ENCODE measurements at regions of chr2 and their contacts with region 1.

Region 1: GRCh38 chr2:217713395-217714286 is 289.2 kb downstream of the TNS1 start:
- DNase-seq: peak; percentile 26
- ATAC-seq: peak; percentile 89
- H3K4me3 ChIP-seq: no peak overlapping the region
- H3K27ac ChIP-seq: no peak overlapping the region
- H3K4me1 ChIP-seq: no peaks in the 10 kb centered on the region
- H3K27me3 ChIP-seq: peaks cover 45% of the 10 kb centered on the region
- CTCF ChIP-seq: peak; percentile 83 to 96 (median 95)
- POLR2A ChIP-seq: no peak
- RAD21 ChIP-seq: peak; percentile 97

Region 2: DNA sequence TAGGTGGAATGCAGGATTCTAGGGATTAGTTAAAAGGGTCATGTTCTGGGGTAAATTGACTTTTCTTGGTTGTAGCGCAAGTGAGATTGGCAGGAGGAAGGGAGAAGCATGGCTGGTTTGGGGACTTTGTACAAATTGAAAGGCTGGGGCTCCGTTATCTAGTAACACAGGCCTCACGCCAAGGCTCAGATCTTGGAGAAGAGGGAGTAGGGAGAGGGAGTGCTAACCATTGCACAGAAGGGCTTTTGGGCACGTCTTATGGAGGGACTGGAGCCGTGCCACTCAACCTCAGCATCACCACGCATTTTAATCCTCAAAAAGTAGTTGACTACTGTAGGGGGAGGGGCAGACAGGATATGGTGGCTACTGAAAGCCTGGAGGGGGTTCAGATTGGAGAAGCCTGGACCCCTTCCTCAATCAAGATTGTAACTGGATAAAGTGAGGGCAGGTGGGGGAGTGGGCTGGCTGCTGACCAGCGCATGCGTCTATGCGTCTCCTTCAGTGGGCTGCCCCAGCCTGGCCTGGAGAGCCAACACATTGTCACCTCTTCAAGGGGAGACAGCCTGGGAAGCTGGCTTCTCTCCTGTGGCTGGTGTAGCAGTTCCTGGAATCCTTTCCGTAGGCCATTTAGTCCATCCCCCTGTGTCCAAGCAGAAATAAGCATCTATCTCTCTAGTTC is 1032.6 kb before region 1 on chr2:
- CTCF ChIA-PET with region 1: interaction called, 9 read pairs
- POLR2A ChIA-PET with region 1: no interaction called
- RAD21 ChIA-PET with region 1: no interaction called
- intact Hi-C with region 1: loop called (anchors 1 kb)
- DNase-seq: no peak
- ATAC-seq: no peak
- H3K4me3 ChIP-seq: no peak overlapping the region
- H3K27ac ChIP-seq: no peak overlapping the region
- H3K4me1 ChIP-seq: peaks cover 10% of the 10 kb centered on the region in 2 experiments
- H3K27me3 ChIP-seq: no peaks in the 10 kb centered on the region
- CTCF ChIP-seq: no peak
- POLR2A ChIP-seq: no peak
- RAD21 ChIP-seq: no peak

Region 3: DNA sequence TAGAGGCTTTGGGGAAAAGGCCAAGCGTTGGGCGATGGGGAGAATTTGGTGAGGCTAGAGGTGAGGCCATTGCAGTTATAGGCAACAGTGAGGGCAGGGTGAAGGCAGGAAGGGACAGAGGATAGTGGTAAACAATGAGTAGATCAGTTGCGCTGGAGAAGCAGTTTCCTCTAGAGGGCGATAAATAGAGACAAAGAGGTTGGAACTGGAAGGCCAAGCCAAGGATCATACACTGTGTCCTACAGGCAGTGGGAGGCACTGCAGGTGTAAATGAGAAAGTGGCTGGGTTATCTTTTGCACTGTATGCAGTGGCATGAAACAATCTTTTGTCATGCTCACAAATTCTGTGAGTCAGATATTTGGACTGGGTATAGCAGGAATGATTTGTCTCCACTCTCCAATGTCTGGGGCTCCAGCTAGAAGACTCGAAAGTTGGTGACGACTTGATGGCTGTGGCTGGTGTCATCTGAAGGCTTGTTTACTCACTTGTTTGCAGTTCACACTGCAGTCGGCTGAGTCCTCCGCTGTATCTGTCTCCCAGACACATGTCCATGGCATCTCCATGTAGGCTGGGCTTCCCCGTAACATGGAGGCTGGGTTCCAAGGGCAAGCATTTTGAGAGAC is 935.9 kb before region 1 on chr2:
- CTCF ChIA-PET with region 1: no interaction called
- POLR2A ChIA-PET with region 1: no interaction called
- RAD21 ChIA-PET with region 1: no interaction called
- intact Hi-C with region 1: loop called (anchors 5 kb)
- DNase-seq: peak; percentile 84
- ATAC-seq: peak; percentile 99
- H3K4me3 ChIP-seq: no peak overlapping the region
- H3K27ac ChIP-seq: no peak overlapping the region
- H3K4me1 ChIP-seq: no peaks in the 10 kb centered on the region
- H3K27me3 ChIP-seq: no peaks in the 10 kb centered on the region
- CTCF ChIP-seq: peak; percentile 95 to 99 (median 95)
- POLR2A ChIP-seq: no peak
- RAD21 ChIP-seq: peak; percentile 73

Region 4: GRCh38 chr2:217166241-217166850 is 547.3 kb before region 1 on chr2:
- CTCF ChIA-PET with region 1: interaction called, 16 read pairs
- POLR2A ChIA-PET with region 1: no interaction called
- RAD21 ChIA-PET with region 1: interaction called in 1 of 2 experiments, 3 read pairs
- intact Hi-C with region 1: loop called (anchors 5 kb)
- DNase-seq: peak; percentile 32
- ATAC-seq: peak; percentile 76
- H3K4me3 ChIP-seq: no peak overlapping the region
- H3K27ac ChIP-seq: no peak overlapping the region
- H3K4me1 ChIP-seq: peaks cover 0 to 6% of the 10 kb centered on the region in 2 experiments; a peak in 2 of 4 replicates
- H3K27me3 ChIP-seq: peaks cover 27% of the 10 kb centered on the region
- CTCF ChIP-seq: peak; percentile 49 to 65 (median 61); a peak in 5 of 6 replicates
- POLR2A ChIP-seq: no peak
- RAD21 ChIP-seq: peak; percentile 74

Region 5: DNA sequence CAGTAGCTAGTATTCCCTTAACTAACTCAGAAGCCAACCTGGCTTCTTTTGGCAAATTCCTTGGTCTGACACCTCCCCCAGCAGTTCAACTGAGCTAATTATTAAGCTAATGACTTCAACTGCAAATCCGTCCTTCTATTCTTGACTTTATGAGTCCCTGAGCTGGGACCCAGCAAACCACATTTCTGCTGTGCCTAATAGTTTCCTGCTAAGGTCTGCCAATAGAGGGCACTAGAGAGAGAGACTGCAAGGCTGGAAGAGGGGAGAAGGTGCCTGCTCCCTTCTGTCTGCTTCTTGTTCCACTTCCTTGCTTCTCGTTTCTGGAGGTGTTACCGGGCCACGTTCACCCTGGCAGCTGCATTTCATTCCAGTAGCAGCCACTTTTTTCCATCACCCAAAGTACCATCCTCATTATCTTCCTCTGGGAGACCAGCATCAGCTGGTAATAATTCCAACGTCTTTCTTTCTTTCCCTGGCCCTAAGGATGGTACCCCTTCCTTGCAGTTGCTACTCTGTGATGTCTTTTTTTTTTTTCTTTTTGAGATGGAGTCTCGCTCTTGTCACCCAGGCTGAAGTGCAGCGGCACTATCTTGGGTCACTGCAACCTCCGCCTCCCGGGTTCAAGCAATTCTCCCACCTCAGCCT is 62.8 kb before region 1 on chr2:
- CTCF ChIA-PET with region 1: interaction called, 18 read pairs
- POLR2A ChIA-PET with region 1: no interaction called
- RAD21 ChIA-PET with region 1: interaction called in 1 of 2 experiments, 4 read pairs
- intact Hi-C with region 1: loop called (anchors 2 kb)
- DNase-seq: peak; percentile 60
- ATAC-seq: peak; percentile 87
- H3K4me3 ChIP-seq: no peak overlapping the region
- H3K27ac ChIP-seq: no peak overlapping the region
- H3K4me1 ChIP-seq: peaks cover 7 to 21% of the 10 kb centered on the region in 2 experiments; a peak in 3 of 4 replicates
- H3K27me3 ChIP-seq: no peaks in the 10 kb centered on the region
- CTCF ChIP-seq: peak; percentile 57 to 93 (median 82); a peak in 5 of 6 replicates
- POLR2A ChIP-seq: no peak
- RAD21 ChIP-seq: peak; percentile 60

Region 6: GRCh38 chr2:218529990-218530389 is 816.3 kb after region 1 on chr2:
- CTCF ChIA-PET with region 1: no interaction called
- POLR2A ChIA-PET with region 1: no interaction called
- RAD21 ChIA-PET with region 1: no interaction called
- intact Hi-C with region 1: no loop called
- DNase-seq: no peak
- ATAC-seq: no peak
- H3K4me3 ChIP-seq: no peak overlapping the region
- H3K27ac ChIP-seq: no peak overlapping the region
- H3K4me1 ChIP-seq: no peaks in the 10 kb centered on the region
- H3K27me3 ChIP-seq: no peaks in the 10 kb centered on the region
- CTCF ChIP-seq: no peak
- POLR2A ChIP-seq: no peak
- RAD21 ChIP-seq: no peak

Measured in HCT116 (cell line).